Naive thymus-derived CD4-positive, alpha-beta T cell (primary cell): ENCODE measurements at regions of chr2 and their contacts with region 1.

Region 1: GRCh38 chr2:224585205-224586088 is at the start of gene CUL3:
- DNase-seq: peak; percentile 98 to 100 (median 99)
- ATAC-seq: peak; percentile 96
- H3K4me3 ChIP-seq: peak within 1 kb of the TSS; percentile 93
- H3K4me3 Mint-ChIP-seq: peak within 1 kb of the TSS; percentile 84 to 100 (median 98)
- H3K27ac ChIP-seq: peak within 1 kb of the TSS; percentile 92
- H3K27ac Mint-ChIP-seq: peak within 1 kb of the TSS; percentile 85 to 98 (median 93)
- H3K4me1 ChIP-seq: peaks cover 22 to 28% of the 10 kb centered on the region in 2 donors
- H3K4me1 Mint-ChIP-seq: peaks cover 9 to 50% (median 45%) of the 10 kb centered on the region in 7 donors
- H3K27me3 ChIP-seq: no peaks in the 10 kb centered on the region
- H3K27me3 Mint-ChIP-seq: no peaks in the 10 kb centered on the region
- total RNA-seq, gene CUL3: 70.5 to 97.0 (median 87.8) TPM

Region 2: GRCh38 chr2:222655787-222656525 is 1929.5 kb before region 1 on chr2 and contains the start of gene FARSB:
- CTCF ChIA-PET with region 1: no interaction called
- POLR2A ChIA-PET with region 1: no interaction called
- intact Hi-C with region 1: loop called (anchors 1 to 2 kb)
- DNase-seq: peak; percentile 86 to 98 (median 94)
- ATAC-seq: peak; percentile 96
- H3K4me3 ChIP-seq: peak within 1 kb of the TSS; percentile 82
- H3K4me3 Mint-ChIP-seq: peak within 1 kb of the TSS; percentile 95 to 100 (median 99)
- H3K27ac ChIP-seq: peak within 1 kb of the TSS; percentile 94
- H3K27ac Mint-ChIP-seq: peak within 1 kb of the TSS; percentile 98 to 100 (median 99)
- H3K4me1 ChIP-seq: peaks cover 18 to 20% of the 10 kb centered on the region in 2 donors
- H3K4me1 Mint-ChIP-seq: peaks cover 30 to 59% (median 45%) of the 10 kb centered on the region in 7 donors
- H3K27me3 ChIP-seq: no peaks in the 10 kb centered on the region
- H3K27me3 Mint-ChIP-seq: no peaks in the 10 kb centered on the region
- total RNA-seq, gene FARSB: 10.5 to 23.3 (median 13.8) TPM

Region 3: GRCh38 chr2:223944703-223945531 is 640.5 kb before region 1 on chr2 and contains the start of gene WDFY1:
- CTCF ChIA-PET with region 1: no interaction called
- POLR2A ChIA-PET with region 1: no interaction called
- intact Hi-C with region 1: loop called in 1 of 2 experiments (anchors 1 kb)
- DNase-seq: peak; percentile 64 to 80 (median 70)
- ATAC-seq: peak; percentile 95
- H3K4me3 ChIP-seq: peak within 1 kb of the TSS; percentile 77
- H3K4me3 Mint-ChIP-seq: peak within 1 kb of the TSS; percentile 88 to 98 (median 92)
- H3K27ac ChIP-seq: peak within 1 kb of the TSS; percentile 67
- H3K27ac Mint-ChIP-seq: peak within 1 kb of the TSS; percentile 76 to 93 (median 85)
- H3K4me1 ChIP-seq: peaks cover 24 to 40% of the 10 kb centered on the region in 2 donors
- H3K4me1 Mint-ChIP-seq: peaks cover 39 to 67% (median 62%) of the 10 kb centered on the region in 7 donors
- H3K27me3 ChIP-seq: no peaks in the 10 kb centered on the region
- H3K27me3 Mint-ChIP-seq: no peaks in the 10 kb centered on the region
- total RNA-seq, gene WDFY1: 25.3 to 80.1 (median 29.9) TPM

Region 4: DNA sequence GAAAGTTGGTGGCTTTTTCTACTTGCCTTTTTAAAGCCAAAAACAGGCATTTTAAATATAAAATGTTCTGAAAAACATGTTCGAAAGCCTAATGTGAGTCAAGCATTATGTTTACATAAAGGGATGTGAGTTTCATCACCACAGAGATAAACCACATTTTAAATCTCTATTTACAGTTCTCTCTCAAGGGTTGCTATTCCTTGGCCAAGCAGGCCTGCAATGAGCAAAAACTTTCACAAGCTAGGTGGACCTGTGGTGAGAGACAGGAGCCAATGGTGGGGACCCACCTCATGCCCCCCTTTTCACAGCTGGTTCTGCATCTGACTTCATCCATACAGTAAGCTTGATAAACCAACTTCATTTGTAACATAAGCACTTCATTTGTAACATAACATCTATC is 65.4 kb before region 1 on chr2:
- CTCF ChIA-PET with region 1: no interaction called
- POLR2A ChIA-PET with region 1: interaction called, 4 read pairs
- intact Hi-C with region 1: loop called (anchors 1 to 2 kb)
- DNase-seq: peak in 2 of 9 donors; percentile 2 to 29
- ATAC-seq: peak; percentile 33
- H3K4me3 ChIP-seq: no peak overlapping the region
- H3K4me3 Mint-ChIP-seq: peak overlapping the region in 9 of 10 donors; percentile 11 to 64 (median 32)
- H3K27ac ChIP-seq: no peak overlapping the region
- H3K27ac Mint-ChIP-seq: peak overlapping the region in 7 of 9 donors; percentile 3 to 76 (median 23)
- H3K4me1 ChIP-seq: peaks cover 33 to 35% of the 10 kb centered on the region in 2 donors
- H3K4me1 Mint-ChIP-seq: peaks cover 56 to 72% (median 63%) of the 10 kb centered on the region in 7 donors
- H3K27me3 ChIP-seq: no peaks in the 10 kb centered on the region
- H3K27me3 Mint-ChIP-seq: no peaks in the 10 kb centered on the region

Region 5: DNA sequence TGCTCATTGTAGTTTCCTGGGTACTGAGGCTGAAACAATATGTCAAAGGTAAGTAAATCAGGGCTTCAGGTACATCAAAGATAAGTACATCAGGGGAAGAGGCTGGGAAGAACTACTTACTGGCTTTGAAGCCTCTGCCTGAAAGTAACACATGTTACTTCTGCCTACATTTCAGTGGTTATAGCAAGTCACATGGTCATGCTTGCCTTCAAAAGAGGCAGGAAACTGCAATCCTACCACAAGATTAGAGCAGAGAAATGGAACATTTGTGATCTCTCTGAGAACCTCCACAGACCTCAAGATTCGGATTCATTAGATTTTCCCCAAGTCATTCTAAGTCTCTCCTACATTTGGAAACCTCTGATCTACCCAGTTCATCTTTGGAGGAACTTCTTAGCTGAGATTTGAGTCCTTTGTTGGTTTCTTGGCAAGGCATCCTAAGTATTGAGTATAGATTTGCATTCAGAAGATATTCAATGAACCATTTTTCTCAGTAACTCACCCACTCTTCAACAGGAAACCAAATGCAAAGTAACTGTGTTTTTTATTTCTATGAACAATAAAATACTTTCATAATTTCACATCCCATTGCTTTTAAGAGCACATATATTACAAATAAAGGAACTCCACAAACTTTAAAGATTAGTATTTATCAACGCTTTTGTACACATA is 179.3 kb after region 1 on chr2:
- CTCF ChIA-PET with region 1: no interaction called
- POLR2A ChIA-PET with region 1: no interaction called
- intact Hi-C with region 1: loop called in 1 of 2 experiments (anchors 5 kb)
- DNase-seq: peak in 7 of 9 donors; percentile 39 to 72 (median 53)
- ATAC-seq: peak; percentile 88
- H3K4me3 ChIP-seq: no peak overlapping the region
- H3K4me3 Mint-ChIP-seq: peak overlapping the region; percentile 7 to 77 (median 38)
- H3K27ac ChIP-seq: peak overlapping the region; percentile 34
- H3K27ac Mint-ChIP-seq: peak overlapping the region; percentile 70 to 92 (median 76)
- H3K4me1 ChIP-seq: peaks cover 0 to 18% of the 10 kb centered on the region in 2 donors
- H3K4me1 Mint-ChIP-seq: peaks cover 20 to 69% (median 42%) of the 10 kb centered on the region in 7 donors
- H3K27me3 ChIP-seq: no peaks in the 10 kb centered on the region
- H3K27me3 Mint-ChIP-seq: no peaks in the 10 kb centered on the region

Region 6: GRCh38 chr2:225041851-225042799 is 456.7 kb after region 1 on chr2 and contains the start of gene DOCK10:
- CTCF ChIA-PET with region 1: no interaction called
- POLR2A ChIA-PET with region 1: no interaction called
- intact Hi-C with region 1: loop called (anchors 5 to 10 kb)
- DNase-seq: peak; percentile 38 to 60 (median 57)
- ATAC-seq: peak; percentile 67
- H3K4me3 ChIP-seq: peak within 1 kb of the TSS; percentile 85
- H3K4me3 Mint-ChIP-seq: peak within 1 kb of the TSS; percentile 93 to 100 (median 98)
- H3K27ac ChIP-seq: peak within 1 kb of the TSS; percentile 96
- H3K27ac Mint-ChIP-seq: peak within 1 kb of the TSS; percentile 92 to 99 (median 96)
- H3K4me1 ChIP-seq: peaks cover 31 to 41% of the 10 kb centered on the region in 2 donors
- H3K4me1 Mint-ChIP-seq: peaks cover 40 to 61% (median 55%) of the 10 kb centered on the region in 7 donors
- H3K27me3 ChIP-seq: no peaks in the 10 kb centered on the region
- H3K27me3 Mint-ChIP-seq: peaks cover 0 to 29% (median 0%) of the 10 kb centered on the region in 5 donors
- total RNA-seq, gene DOCK10: 200 to 275 (median 231) TPM